Lower leg skin (tissue), 4 donors: ENCODE measurements at regions of chr19 and their contacts with region 1.

Region 1: DNA sequence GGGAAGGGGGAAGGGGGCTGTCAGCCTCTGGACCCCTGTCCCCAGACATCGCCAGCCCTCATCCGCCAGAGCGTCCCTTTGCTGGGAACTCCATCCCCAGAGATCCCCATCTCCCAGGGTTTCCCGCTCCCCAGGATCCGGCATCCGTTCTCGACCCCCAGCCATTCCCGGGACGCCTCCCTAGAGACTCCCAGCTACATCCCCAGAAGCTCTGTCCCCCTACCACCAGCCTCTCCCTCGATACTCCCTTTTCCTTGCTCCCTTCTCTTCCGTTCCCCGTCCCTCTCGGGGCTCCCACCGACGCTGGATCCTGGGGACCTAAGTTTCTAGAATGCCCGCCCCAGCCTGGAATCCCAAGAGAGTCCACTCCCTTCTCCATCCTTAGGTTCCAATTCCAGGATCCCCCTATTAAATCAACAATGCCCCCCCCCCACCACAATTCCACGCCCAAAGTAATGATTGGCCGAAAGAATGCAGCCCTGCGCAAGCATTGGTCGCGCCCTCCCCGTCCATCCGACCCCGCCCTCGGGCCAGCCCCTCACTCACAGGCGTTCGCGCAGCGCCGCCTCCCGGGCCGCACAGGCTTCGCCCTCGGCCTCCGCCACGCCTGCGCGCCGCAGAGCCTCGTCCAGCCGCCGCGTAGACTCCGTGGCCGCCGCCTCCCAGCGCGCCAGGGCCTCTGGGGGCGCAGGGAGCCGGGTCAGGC is 3.2 kb downstream of the CCDC194 start:
- DNase-seq: peak; percentile 83 to 97
- H3K4me3 ChIP-seq: peak overlapping the region; percentile 29
- CTCF ChIP-seq: no peak
- POLR2A ChIP-seq: no peak

Region 2: GRCh38 chr19:17292286-17293097 is 98.3 kb before region 1 on chr19:
- intact Hi-C with region 1: loop called (anchors 10 kb)
- DNase-seq: peak; percentile 65 to 93
- H3K4me3 ChIP-seq: peak overlapping the region; percentile 6
- CTCF ChIP-seq: no peak
- POLR2A ChIP-seq: no peak

Region 3: GRCh38 chr19:17469481-17470067 is 78.8 kb after region 1 on chr19:
- intact Hi-C with region 1: loop called (anchors 10 kb)
- DNase-seq: peak; percentile 97 to 99
- H3K4me3 ChIP-seq: peak overlapping the region; percentile 15
- CTCF ChIP-seq: no peak
- POLR2A ChIP-seq: no peak